HEK293 (cell line): ENCODE measurements at regions of chr16 and their contacts with region 1.

Region 1: GRCh38 chr16:84952335-84953189 is 58.8 kb downstream of the ZDHHC7 start:
- H3K4me3 ChIP-seq: no peak overlapping the region
- H3K27ac ChIP-seq: no peak overlapping the region
- H3K4me1 ChIP-seq: no peaks in the 10 kb centered on the region
- CTCF ChIP-seq: peak; percentile 75

Region 2: GRCh38 chr16:84738255-84739038 is 214.1 kb before region 1 on chr16:
- CTCF ChIA-PET with region 1: interaction called, 14 read pairs
- POLR2A ChIA-PET with region 1: no interaction called
- H3K4me3 ChIP-seq: no peak overlapping the region
- H3K27ac ChIP-seq: no peak overlapping the region
- H3K4me1 ChIP-seq: peaks cover 10% of the 10 kb centered on the region
- CTCF ChIP-seq: peak; percentile 73

Region 3: GRCh38 chr16:84773312-84773711 is 179.2 kb before region 1 on chr16:
- CTCF ChIA-PET with region 1: interaction called, 14 read pairs
- POLR2A ChIA-PET with region 1: no interaction called
- H3K4me3 ChIP-seq: no peak overlapping the region
- H3K27ac ChIP-seq: no peak overlapping the region
- H3K4me1 ChIP-seq: no peaks in the 10 kb centered on the region
- CTCF ChIP-seq: no peak

Region 4: GRCh38 chr16:84925092-84925772 is 27.3 kb before region 1 on chr16:
- CTCF ChIA-PET with region 1: interaction called, 50 read pairs
- POLR2A ChIA-PET with region 1: no interaction called
- H3K4me3 ChIP-seq: no peak overlapping the region
- H3K27ac ChIP-seq: no peak overlapping the region
- H3K4me1 ChIP-seq: no peaks in the 10 kb centered on the region; the same call in 1 of the 2 replicates
- CTCF ChIP-seq: peak; percentile 73

Region 5: DNA sequence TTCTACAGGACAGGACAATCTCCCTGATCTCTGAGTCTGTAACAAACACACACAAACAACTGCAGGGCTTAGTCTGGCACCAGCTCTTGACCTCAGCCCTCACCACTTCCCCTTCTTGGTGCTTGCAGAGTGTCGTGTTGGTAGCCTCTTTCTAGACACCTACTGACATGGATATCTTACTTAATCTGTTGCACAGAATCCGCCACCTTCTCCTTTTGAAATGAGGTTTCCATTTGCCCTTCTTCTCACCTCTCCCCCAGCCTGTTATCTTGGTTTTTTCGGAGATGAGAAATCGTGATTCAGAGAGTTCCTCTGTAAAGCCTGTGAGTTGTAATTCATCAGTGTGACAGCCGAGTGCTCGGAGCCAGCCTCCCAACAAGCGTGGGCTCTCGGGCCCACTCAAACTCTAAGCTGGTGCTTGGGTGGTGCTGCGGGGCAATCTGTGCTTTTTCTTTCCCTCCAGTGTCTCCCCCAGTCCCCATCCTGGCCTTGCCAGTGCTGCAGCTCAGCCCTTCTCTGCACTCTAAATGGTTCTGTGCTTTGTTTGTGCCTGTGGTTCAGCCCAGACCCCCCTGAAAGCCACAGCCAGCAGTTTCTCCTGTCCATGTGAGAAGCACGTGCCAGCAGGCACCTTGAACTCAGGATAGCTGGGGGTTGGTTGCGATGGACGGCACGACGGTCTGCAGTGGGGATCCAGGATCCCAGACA is 103.1 kb after region 1 on chr16:
- CTCF ChIA-PET with region 1: no interaction called
- POLR2A ChIA-PET with region 1: no interaction called
- H3K4me3 ChIP-seq: no peak overlapping the region
- H3K27ac ChIP-seq: no peak overlapping the region; the same call in 1 of the 2 replicates
- H3K4me1 ChIP-seq: peaks cover 4% of the 10 kb centered on the region
- CTCF ChIP-seq: no peak